ENCODE measurements at regions of chr5 and their contacts with region 1.

Region 1: DNA sequence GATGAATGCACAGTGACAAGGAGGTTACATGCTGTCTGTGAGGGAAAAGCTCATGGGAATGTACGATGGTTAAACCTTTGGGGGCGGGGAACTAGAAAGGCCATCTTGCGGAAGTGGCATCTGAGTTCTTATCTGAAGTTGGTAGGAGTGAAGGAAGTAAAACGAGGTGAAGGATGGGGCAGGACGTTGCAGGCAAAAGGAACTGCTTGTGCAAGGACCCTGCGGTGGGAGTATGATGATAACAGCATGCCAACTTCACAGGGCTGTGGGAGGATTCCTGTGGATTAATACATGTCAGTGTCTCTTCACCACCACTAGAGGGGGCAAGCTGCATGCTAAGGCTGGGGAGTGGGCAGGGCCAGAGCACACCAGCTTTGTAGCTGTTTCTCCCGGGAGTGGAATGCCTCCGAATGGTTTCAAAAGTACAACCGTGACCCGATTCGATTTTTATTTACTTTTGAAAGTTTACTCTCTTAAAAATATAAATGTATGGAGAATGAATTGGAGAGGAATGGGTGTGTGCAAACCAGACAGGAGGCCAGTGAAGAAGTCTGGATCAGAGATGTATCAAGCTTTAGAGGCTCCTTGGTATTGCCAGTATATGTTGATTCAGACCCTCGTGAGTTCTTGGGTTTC is 62.5 kb downstream of the CYFIP2 start:
- DNase-seq: peak; percentile 70
- ATAC-seq: peak; percentile 96
- H3K4me3 Mint-ChIP-seq: no peak overlapping the region
- H3K27ac Mint-ChIP-seq: peak overlapping the region; percentile 47
- H3K4me1 Mint-ChIP-seq: peaks cover 10% of the 10 kb centered on the region
- H3K27me3 Mint-ChIP-seq: no peaks in the 10 kb centered on the region

Region 2: DNA sequence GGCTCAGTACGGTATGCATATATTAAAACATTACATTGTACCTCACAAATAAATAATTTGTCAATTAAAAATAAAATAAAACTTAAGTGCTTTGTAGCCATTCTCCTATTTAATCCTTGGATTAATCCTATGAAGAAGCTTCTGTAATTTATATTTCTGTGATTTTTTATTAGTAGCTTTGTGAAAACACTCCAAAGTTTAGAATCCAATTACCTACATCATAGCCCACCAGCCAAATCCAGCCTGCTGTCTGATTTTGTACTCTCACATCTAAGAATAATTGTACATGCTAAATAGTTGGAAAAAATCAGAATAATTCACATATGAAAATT is 196.1 kb before region 1 on chr5:
- CTCF ChIA-PET with region 1: no interaction called
- DNase-seq: no peak
- ATAC-seq: no peak
- H3K4me3 Mint-ChIP-seq: no peak overlapping the region
- H3K27ac Mint-ChIP-seq: no peak overlapping the region
- H3K4me1 Mint-ChIP-seq: peaks cover 33% of the 10 kb centered on the region
- H3K27me3 Mint-ChIP-seq: no peaks in the 10 kb centered on the region

Region 3: DNA sequence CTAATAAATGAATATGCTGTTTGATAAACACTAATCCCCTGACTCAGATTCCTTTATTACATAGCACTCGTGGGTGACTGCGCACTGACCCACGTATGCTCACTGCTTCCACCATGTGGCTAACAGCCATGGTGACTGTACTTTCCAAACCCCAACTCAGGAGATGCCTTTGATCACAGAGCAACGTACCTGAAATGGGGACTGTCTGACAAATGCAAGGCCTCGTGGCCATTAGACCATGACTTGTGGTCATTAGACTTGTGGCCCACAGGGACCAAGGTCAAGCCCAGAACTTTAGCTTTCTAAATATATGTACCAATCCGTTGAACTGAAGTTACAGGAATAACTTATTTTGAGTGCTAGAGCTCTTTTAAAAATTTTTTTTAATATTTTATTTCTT is 15.9 kb before region 1 on chr5:
- CTCF ChIA-PET with region 1: interaction called, 12 read pairs
- DNase-seq: peak; percentile 73
- ATAC-seq: peak; percentile 90
- H3K4me3 Mint-ChIP-seq: no peak overlapping the region
- H3K27ac Mint-ChIP-seq: peak overlapping the region; percentile 58
- H3K4me1 Mint-ChIP-seq: peaks cover 21% of the 10 kb centered on the region
- H3K27me3 Mint-ChIP-seq: no peaks in the 10 kb centered on the region

Region 4: DNA sequence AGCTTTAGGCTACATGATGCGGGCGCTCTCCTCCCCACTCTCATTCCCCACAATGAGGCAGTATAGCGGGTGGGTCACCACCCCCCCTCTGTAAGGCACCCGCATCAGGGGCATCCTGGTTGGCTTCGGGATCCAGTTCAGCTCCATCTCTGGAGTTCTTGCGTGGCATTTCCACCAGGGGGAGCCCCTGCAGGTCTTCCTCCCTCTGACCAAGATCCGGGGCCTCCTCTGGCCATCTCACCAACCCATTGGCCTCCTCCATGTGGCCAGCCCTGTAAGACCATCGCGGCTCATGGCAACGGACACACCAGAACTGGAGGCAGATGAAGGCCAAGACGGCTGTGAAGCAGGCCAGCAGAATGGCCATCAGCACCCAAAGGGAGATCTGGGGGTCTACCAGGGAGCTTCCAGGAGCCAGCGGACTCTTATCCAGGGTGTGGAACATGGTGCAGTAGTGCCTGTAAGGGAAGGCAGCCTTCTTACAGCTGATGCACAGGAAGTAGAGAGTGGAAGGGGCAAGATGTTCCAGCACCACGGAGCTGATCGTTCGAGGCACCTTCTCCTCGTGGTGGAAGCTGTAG is 14.5 kb after region 1 on chr5:
- CTCF ChIA-PET with region 1: interaction called, 16 read pairs
- DNase-seq: peak; percentile 52
- ATAC-seq: peak; percentile 34
- H3K4me3 Mint-ChIP-seq: no peak overlapping the region
- H3K27ac Mint-ChIP-seq: no peak overlapping the region
- H3K4me1 Mint-ChIP-seq: peaks cover 52% of the 10 kb centered on the region
- H3K27me3 Mint-ChIP-seq: no peaks in the 10 kb centered on the region

Region 5: GRCh38 chr5:157354800-157355199 is 26.4 kb after region 1 on chr5:
- CTCF ChIA-PET with region 1: interaction called, 17 read pairs
- DNase-seq: no peak
- ATAC-seq: no peak
- H3K4me3 Mint-ChIP-seq: no peak overlapping the region
- H3K27ac Mint-ChIP-seq: no peak overlapping the region
- H3K4me1 Mint-ChIP-seq: peaks cover 34% of the 10 kb centered on the region
- H3K27me3 Mint-ChIP-seq: no peaks in the 10 kb centered on the region

Region 6: DNA sequence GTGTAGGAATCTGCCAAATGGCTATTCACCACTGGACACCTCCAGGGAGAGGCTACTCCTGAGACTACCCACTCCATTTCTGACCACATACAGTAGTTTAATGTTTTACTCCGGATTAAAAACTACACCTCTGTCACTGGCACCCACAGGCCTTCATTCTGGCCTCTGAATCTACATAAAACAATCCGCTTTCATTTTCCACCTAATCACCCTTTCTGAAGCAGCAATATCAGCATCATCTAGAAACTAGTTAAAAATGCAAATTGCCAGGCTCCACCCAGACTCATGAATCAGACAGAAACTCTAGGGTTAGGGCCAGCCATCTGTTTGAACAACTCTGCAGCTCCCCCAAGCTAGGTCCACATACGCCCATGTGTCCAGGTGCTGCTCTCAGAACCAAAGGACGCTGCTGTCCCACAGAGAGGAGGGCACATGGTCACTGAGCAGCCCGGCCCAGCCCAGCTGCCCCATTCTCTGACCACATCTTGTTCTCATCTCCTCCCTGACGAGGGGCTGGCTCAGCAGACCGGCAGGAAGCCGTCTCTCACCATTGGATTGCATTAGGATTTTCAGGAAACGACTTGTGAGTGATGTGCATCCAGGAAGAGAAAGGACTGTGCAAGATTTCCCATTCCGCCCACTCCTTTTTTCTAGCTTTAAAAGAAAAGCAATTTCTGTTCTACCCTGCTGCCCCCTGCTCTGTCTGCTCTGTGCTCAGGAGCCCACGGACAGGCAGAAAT is 212.5 kb after region 1 on chr5:
- CTCF ChIA-PET with region 1: no interaction called
- DNase-seq: peak; percentile 80
- ATAC-seq: peak; percentile 80
- H3K4me3 Mint-ChIP-seq: peak overlapping the region; percentile 68
- H3K27ac Mint-ChIP-seq: peak overlapping the region; percentile 95
- H3K4me1 Mint-ChIP-seq: peaks cover 93% of the 10 kb centered on the region
- H3K27me3 Mint-ChIP-seq: no peaks in the 10 kb centered on the region

Measured in activated CD8-positive, alpha-beta memory T cell treated with anti-CD3 and anti-CD28 coated beads, Interleukin-2, amount 10 ng/mL, durations not matched to agents 7 days and 5 days (primary cell).